ENCODE measurements at regions of chr15 and their contacts with region 1.

Region 1: DNA sequence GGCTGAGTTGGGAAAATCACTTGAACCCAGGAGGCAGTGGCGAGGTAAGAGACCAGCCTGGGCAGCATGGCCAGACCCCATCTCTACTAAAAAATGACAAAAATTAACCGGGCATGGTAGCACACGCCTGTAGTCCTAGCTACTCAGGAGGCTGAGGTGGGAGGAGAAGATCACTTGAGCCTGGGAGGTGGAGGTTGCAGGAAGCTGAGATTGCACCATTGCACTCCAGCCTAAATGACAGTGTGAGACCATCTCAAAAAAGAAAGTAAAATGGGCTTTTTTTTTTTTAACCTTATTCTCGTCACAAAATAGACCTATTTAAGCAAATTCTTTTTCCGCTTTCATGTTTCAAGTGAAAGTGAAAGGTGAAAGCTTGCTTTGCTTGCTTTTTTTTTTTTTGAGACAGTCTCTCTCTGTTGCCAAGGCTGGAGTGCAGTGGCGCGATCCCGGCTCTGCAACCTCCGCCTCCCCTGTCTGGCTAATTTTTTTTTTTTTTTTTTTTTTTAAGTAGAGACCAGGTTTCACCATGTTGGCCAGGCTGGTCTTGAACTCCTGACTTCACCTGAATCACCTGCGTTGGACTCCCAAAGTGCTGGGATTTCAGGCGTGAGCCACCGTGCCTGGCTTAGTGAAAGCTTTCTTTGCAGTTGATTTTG is 3.6 kb downstream of the PDIA3 start:
- DNase-seq: no peak
- ATAC-seq: peak; percentile 41
- H3K4me3 Mint-ChIP-seq: peak overlapping the region; percentile 72
- H3K27ac Mint-ChIP-seq: peak overlapping the region; percentile 87
- H3K4me1 Mint-ChIP-seq: peaks cover 70% of the 10 kb centered on the region
- H3K27me3 Mint-ChIP-seq: no peaks in the 10 kb centered on the region
- CTCF ChIP-seq: no peak

Region 2: GRCh38 chr15:43492673-43493601 is 256.9 kb before region 1 on chr15 and contains the start of gene TP53BP1:
- CTCF ChIA-PET with region 1: no interaction called
- POLR2A ChIA-PET with region 1: no interaction called
- intact Hi-C with region 1: loop called (anchors 5 kb)
- DNase-seq: peak; percentile 87
- ATAC-seq: peak; percentile 99
- H3K4me3 Mint-ChIP-seq: peak within 1 kb of the TSS; percentile 98
- H3K27ac Mint-ChIP-seq: peak within 1 kb of the TSS; percentile 95
- H3K4me1 Mint-ChIP-seq: peaks cover 19% of the 10 kb centered on the region
- H3K27me3 Mint-ChIP-seq: no peaks in the 10 kb centered on the region
- CTCF ChIP-seq: no peak
- total RNA-seq, gene TP53BP1: 53.9 and 54.6 TPM in 2 replicates

Region 3: DNA sequence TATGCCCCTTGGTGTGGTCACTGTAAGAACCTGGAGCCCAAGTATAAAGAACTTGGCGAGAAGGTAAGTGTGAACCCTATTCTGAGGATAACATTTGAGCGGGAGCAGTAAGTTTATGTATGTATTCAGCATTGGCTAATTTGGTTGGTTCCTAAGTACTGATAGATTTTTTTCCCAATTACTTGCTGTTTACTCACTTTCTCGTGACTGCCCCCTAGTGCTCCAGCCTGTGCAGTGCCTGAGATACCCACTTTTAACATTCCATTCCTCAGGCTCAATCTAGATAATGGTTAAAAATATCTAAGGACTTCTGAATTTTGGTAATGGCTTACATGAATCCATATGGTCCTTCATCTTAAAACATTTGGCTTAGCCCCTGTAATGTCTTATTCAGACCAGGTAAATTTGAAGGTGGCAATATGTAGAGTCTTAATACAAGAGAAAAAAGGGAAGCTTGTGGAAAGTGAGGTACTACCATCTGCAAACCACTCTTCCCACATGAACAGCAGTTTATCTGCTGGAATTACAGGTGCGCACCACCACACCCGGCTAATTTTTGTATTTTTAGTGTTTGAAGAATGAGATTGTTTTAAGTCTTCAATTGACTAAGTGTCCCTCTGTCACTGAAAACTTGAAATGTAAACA is 19.9 kb after region 1 on chr15:
- CTCF ChIA-PET with region 1: interaction called, 12 read pairs
- POLR2A ChIA-PET with region 1: interaction called, 14 read pairs
- intact Hi-C with region 1: no loop called
- DNase-seq: no peak
- ATAC-seq: peak; percentile 85
- H3K4me3 Mint-ChIP-seq: no peak overlapping the region
- H3K27ac Mint-ChIP-seq: peak overlapping the region; percentile 6
- H3K4me1 Mint-ChIP-seq: peaks cover 21% of the 10 kb centered on the region
- H3K27me3 Mint-ChIP-seq: no peaks in the 10 kb centered on the region
- CTCF ChIP-seq: peak; percentile 75

Region 4: DNA sequence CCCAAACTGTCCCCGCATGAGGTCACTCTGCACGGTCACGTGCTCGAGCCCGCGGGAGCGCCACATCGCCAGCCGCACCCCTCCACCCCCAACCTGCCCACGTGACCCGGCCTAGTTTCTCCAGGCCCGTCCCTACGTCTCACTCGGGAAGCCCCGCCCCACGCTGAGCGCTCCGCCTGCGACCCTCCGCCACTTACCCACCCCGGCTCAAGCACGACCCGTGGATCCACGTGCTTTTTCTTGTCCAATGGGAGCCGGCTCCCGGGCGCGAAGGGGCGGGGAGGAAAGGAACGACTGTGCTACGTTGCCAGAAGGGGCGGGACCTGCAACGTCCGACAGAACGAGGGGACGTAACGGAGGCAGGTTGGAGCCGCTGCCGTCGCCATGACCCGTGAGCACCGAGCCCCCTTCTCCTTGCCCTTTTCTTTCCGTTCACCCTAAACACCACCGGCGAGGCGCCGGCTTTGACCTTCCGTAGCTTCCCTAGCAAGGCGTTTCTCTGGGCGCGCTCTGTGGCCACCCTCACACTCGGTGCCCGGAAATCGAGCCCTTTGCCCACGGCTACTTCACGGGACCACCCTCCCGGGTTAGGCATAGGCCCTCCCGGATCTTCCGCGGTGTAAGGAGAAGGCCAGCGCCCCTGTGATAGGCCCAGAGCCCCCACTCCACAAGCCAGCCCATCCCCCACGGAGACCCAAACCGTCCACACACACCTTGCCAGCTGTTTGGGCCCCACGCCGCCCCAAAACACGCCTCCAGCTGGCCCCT is 42.4 kb after region 1 on chr15 and contains the start of gene SERF2:
- CTCF ChIA-PET with region 1: no interaction called
- POLR2A ChIA-PET with region 1: interaction called, 16 read pairs
- intact Hi-C with region 1: loop called (anchors 5 kb)
- DNase-seq: peak; percentile 96
- ATAC-seq: peak; percentile 88
- H3K4me3 Mint-ChIP-seq: peak within 1 kb of the TSS; percentile 98
- H3K27ac Mint-ChIP-seq: peak within 1 kb of the TSS; percentile 97
- H3K4me1 Mint-ChIP-seq: peaks cover 79% of the 10 kb centered on the region
- H3K27me3 Mint-ChIP-seq: no peaks in the 10 kb centered on the region
- CTCF ChIP-seq: no peak
- total RNA-seq, gene SERF2: 601 and 656 TPM in 2 replicates

Region 5: GRCh38 chr15:43800286-43801141 is 50.7 kb after region 1 on chr15 and contains the start of gene HYPK:
- CTCF ChIA-PET with region 1: no interaction called
- POLR2A ChIA-PET with region 1: interaction called, 12 read pairs
- intact Hi-C with region 1: no loop called
- DNase-seq: peak; percentile 83
- ATAC-seq: peak; percentile 98
- H3K4me3 Mint-ChIP-seq: peak within 1 kb of the TSS; percentile 98
- H3K27ac Mint-ChIP-seq: peak within 1 kb of the TSS; percentile 96
- H3K4me1 Mint-ChIP-seq: peaks cover 51% of the 10 kb centered on the region
- H3K27me3 Mint-ChIP-seq: no peaks in the 10 kb centered on the region
- CTCF ChIP-seq: no peak
- total RNA-seq, gene HYPK: 19.2 and 19.7 TPM in 2 replicates

Region 6: GRCh38 chr15:43824302-43825246 is 74.8 kb after region 1 on chr15 and contains the start of gene MFAP1:
- CTCF ChIA-PET with region 1: no interaction called
- POLR2A ChIA-PET with region 1: interaction called, 11 read pairs
- intact Hi-C with region 1: loop called (anchors 1 kb)
- DNase-seq: peak; percentile 72
- ATAC-seq: peak; percentile 86
- H3K4me3 Mint-ChIP-seq: peak within 1 kb of the TSS; percentile 99
- H3K27ac Mint-ChIP-seq: peak within 1 kb of the TSS; percentile 99
- H3K4me1 Mint-ChIP-seq: peaks cover 62% of the 10 kb centered on the region
- H3K27me3 Mint-ChIP-seq: no peaks in the 10 kb centered on the region
- CTCF ChIP-seq: no peak
- total RNA-seq, gene MFAP1: 26.1 and 27.9 TPM in 2 replicates

Measured in activated B cell treated with CpG ODN at 0.5 μM for 24 hours (primary cell).